HCT116 (cell line): ENCODE measurements at regions of chr1 and their contacts with region 1.

Region 1: GRCh38 chr1:213817156-213817555 is 170.6 kb upstream of the PROX1 start:
- DNase-seq: no peak
- ATAC-seq: no peak
- H3K4me3 ChIP-seq: no peak overlapping the region
- H3K27ac ChIP-seq: no peak overlapping the region
- H3K4me1 ChIP-seq: no peaks in the 10 kb centered on the region
- H3K27me3 ChIP-seq: peaks cover 8% of the 10 kb centered on the region; the same call in 1 of the 2 replicates
- CTCF ChIP-seq: no peak
- POLR2A ChIP-seq: no peak
- RAD21 ChIP-seq: no peak

Region 2: DNA sequence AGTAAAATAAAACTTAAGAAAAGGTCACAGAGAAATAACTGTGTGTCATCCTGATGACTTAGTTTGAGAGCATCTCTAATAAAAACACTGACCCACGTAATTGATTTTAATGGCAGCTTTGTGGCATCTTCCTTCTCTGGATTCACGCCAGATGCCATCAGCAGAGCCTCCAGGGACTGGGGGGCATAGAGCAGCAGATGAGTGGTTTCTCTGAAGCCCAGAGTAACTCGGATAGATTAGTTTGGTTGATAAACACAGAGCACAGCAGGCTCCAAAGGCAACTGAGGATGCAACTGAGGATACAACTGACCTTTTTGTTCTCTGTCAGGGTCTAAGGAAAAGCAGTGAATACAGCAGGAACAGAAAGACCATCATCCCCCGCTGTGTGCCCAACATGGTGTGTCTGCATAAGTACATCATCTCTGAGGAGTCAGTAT is 585.3 kb before region 1 on chr1:
- CTCF ChIA-PET with region 1: no interaction called
- POLR2A ChIA-PET with region 1: no interaction called
- RAD21 ChIA-PET with region 1: no interaction called
- intact Hi-C with region 1: loop called (anchors 10 kb)
- DNase-seq: no peak
- ATAC-seq: no peak
- H3K4me3 ChIP-seq: no peak overlapping the region
- H3K27ac ChIP-seq: peak overlapping the region; percentile 46; the same call in 1 of the 2 replicates
- H3K4me1 ChIP-seq: peaks cover 2 to 6% of the 10 kb centered on the region in 2 experiments; a peak in 2 of 4 replicates
- H3K27me3 ChIP-seq: no peaks in the 10 kb centered on the region
- CTCF ChIP-seq: no peak
- POLR2A ChIP-seq: no peak
- RAD21 ChIP-seq: no peak

Region 3: GRCh38 chr1:213840575-213840974 is 23.4 kb after region 1 on chr1:
- CTCF ChIA-PET with region 1: no interaction called
- POLR2A ChIA-PET with region 1: no interaction called
- RAD21 ChIA-PET with region 1: no interaction called
- intact Hi-C with region 1: no loop called
- DNase-seq: no peak
- ATAC-seq: no peak
- H3K4me3 ChIP-seq: no peak overlapping the region
- H3K27ac ChIP-seq: no peak overlapping the region
- H3K4me1 ChIP-seq: no peaks in the 10 kb centered on the region
- H3K27me3 ChIP-seq: no peaks in the 10 kb centered on the region
- CTCF ChIP-seq: no peak
- POLR2A ChIP-seq: no peak
- RAD21 ChIP-seq: no peak